ENCODE measurements at regions of chr4 and their contacts with region 1.

Region 1: DNA sequence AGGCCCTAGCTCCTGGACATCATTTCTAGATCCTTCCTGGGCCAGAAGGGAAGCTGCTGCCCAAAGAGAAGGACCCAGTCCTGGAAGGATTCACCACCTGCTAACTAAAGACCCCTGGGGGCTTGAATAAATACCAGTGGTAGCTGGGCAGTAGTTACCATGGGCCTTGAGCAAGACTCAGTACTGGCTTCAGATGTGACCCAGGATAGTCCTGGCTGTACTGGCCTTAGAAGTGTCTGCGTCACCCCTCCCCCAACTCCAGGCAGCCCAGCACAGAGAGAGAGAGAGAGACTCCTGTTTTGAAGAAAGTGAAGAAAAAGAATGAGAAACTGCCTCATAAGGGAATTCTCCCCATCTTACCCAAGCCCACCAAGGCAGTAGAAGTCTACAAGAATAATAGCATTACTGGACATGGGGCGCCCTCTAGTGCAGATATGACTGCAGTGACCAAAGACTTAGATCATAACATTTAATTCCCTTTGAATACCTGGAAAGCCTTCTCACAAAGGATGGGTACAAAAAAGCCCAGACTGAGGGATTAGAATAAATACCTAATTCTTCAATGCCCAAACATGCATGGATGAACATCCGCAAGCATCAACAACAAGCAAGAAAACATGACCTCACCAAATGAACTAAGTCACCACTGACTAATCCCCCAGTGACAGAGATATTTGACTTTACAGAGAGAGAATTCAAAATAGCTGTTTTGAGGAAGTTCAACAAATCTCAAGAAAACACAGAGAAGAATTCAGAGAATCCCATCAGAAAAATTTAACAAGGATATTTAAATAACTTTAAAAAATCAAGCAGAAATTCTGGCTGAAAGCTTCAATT is 171.8 kb downstream of the HNRNPD start:
- DNase-seq: peak; percentile 39 to 52 (median 49)
- H3K4me3 ChIP-seq: no peak overlapping the region
- H3K4me3 Mint-ChIP-seq: no peak overlapping the region
- H3K27ac ChIP-seq: no peak overlapping the region
- H3K27ac Mint-ChIP-seq: no peak overlapping the region
- H3K4me1 ChIP-seq: no peaks in the 10 kb centered on the region
- H3K4me1 Mint-ChIP-seq: peaks cover 0 to 10% (median 3%) of the 10 kb centered on the region in 4 donors
- H3K27me3 ChIP-seq: no peaks in the 10 kb centered on the region
- H3K27me3 Mint-ChIP-seq: peaks cover 5 to 6% of the 10 kb centered on the region in 2 donors

Region 2: DNA sequence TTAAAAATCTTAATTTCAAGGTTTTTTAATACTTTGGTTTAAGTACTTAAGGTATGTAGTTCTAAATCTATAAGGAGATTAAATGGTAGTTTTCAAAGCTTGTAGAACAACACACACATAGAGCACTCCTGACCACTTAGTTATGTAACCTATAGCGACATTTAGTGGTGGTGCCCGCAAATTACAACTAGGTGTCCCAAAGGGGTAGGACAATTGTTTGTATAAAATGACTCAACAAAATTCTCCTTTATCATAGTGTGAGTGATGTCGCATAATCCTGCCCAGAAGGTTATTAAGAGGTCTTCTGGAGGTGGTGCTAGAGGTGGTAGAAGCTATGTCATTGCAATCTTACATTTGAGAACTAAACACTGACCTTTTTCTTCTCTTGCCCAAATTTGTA is 357.3 kb before region 1 on chr4:
- CTCF ChIA-PET with region 1: interaction called, 5 read pairs
- POLR2A ChIA-PET with region 1: no interaction called
- intact Hi-C with region 1: loop called (anchors 2 kb)
- DNase-seq: peak; percentile 64 to 73 (median 71)
- H3K4me3 ChIP-seq: no peak overlapping the region
- H3K4me3 Mint-ChIP-seq: no peak overlapping the region
- H3K27ac ChIP-seq: no peak overlapping the region
- H3K27ac Mint-ChIP-seq: no peak overlapping the region
- H3K4me1 ChIP-seq: no peaks in the 10 kb centered on the region
- H3K4me1 Mint-ChIP-seq: no peaks in the 10 kb centered on the region
- H3K27me3 ChIP-seq: no peaks in the 10 kb centered on the region
- H3K27me3 Mint-ChIP-seq: no peaks in the 10 kb centered on the region

Region 3: GRCh38 chr4:81913427-81913879 is 288.6 kb before region 1 on chr4:
- CTCF ChIA-PET with region 1: no interaction called
- POLR2A ChIA-PET with region 1: no interaction called
- intact Hi-C with region 1: loop called (anchors 10 kb)
- DNase-seq: peak; percentile 39 to 55 (median 52)
- H3K4me3 ChIP-seq: no peak overlapping the region
- H3K4me3 Mint-ChIP-seq: peak overlapping the region in 1 of 8 donors; percentile 50
- H3K27ac ChIP-seq: no peak overlapping the region
- H3K27ac Mint-ChIP-seq: no peak overlapping the region
- H3K4me1 ChIP-seq: no peaks in the 10 kb centered on the region
- H3K4me1 Mint-ChIP-seq: peaks cover 6 to 9% (median 7%) of the 10 kb centered on the region in 4 donors
- H3K27me3 ChIP-seq: no peaks in the 10 kb centered on the region
- H3K27me3 Mint-ChIP-seq: peaks cover 5 to 9% of the 10 kb centered on the region in 2 donors

Region 4: DNA sequence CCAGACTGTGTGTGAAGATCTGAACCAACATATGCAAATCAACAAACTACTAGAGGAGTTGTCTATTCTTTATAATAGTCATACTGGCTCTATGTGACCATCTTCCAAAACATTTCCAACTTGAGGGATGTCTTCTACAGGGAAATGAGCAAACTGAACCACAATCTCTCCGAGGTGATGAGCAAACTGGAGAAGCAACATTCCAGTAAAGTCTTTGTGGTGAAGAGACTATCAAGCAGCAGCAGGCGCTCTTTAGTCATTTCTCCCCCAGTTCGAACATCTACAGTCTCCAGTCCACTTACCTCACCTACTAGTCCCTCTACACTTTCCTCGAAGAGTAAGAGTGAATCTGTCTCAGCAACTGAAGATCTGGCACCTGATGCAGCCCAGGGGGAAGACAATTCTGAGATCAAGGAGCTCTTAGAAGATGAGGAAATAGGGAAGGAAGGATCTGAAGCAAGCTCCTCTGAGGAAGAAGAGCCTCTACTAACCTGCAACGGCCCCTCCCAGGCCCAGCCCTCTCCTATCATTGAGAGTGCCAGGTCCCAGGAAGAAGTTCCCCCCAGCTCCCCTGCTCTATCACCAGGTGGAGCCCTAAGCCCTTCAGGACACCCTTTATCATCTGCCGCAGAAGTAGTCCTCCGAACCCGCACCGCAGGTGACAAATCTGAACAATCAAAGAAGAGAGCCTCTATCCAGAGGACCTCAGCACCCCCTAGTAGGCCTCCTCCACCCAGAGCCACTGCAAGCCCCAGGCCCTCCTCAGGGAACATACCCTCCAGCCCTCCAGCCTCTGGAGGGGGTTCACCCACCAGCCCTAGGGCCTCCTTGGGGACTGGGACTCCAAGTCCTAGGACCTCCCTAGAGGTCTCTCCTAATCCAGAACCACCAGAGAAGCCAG is 73.7 kb after region 1 on chr4:
- CTCF ChIA-PET with region 1: no interaction called
- POLR2A ChIA-PET with region 1: no interaction called
- intact Hi-C with region 1: no loop called
- DNase-seq: no peak
- H3K4me3 ChIP-seq: no peak overlapping the region
- H3K4me3 Mint-ChIP-seq: no peak overlapping the region
- H3K27ac ChIP-seq: no peak overlapping the region
- H3K27ac Mint-ChIP-seq: no peak overlapping the region
- H3K4me1 ChIP-seq: no peaks in the 10 kb centered on the region
- H3K4me1 Mint-ChIP-seq: peaks cover 0 to 21% (median 3%) of the 10 kb centered on the region in 4 donors
- H3K27me3 ChIP-seq: no peaks in the 10 kb centered on the region
- H3K27me3 Mint-ChIP-seq: peaks cover 0 to 3% of the 10 kb centered on the region in 2 donors

Region 5: DNA sequence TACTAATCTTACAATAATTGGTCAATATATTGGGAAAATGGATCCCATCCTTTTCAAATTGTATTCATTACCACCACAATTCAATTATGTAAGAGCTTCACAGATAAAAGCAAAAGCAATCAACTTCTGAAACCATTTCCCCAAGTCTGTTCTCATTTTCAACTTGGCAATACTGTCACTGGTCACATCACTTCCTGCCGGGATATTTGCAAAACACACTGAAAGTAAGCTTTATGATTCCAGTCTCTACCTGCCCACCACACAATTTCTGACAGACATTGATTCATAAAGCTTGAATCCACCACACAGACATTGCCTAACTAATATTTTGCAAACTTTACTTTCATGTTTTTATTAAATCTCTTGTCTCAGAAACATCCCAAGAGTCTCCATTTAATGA is 755.0 kb after region 1 on chr4:
- CTCF ChIA-PET with region 1: no interaction called
- POLR2A ChIA-PET with region 1: no interaction called
- intact Hi-C with region 1: no loop called
- DNase-seq: no peak
- H3K4me3 ChIP-seq: no peak overlapping the region
- H3K4me3 Mint-ChIP-seq: no peak overlapping the region
- H3K27ac ChIP-seq: no peak overlapping the region
- H3K27ac Mint-ChIP-seq: peak overlapping the region in 1 of 7 donors; percentile 21
- H3K4me1 ChIP-seq: no peaks in the 10 kb centered on the region
- H3K4me1 Mint-ChIP-seq: peaks cover 0 to 10% (median 7%) of the 10 kb centered on the region in 4 donors
- H3K27me3 ChIP-seq: no peaks in the 10 kb centered on the region
- H3K27me3 Mint-ChIP-seq: no peaks in the 10 kb centered on the region